ENCODE measurements at regions of chr19 and their contacts with region 1.

Region 1: DNA sequence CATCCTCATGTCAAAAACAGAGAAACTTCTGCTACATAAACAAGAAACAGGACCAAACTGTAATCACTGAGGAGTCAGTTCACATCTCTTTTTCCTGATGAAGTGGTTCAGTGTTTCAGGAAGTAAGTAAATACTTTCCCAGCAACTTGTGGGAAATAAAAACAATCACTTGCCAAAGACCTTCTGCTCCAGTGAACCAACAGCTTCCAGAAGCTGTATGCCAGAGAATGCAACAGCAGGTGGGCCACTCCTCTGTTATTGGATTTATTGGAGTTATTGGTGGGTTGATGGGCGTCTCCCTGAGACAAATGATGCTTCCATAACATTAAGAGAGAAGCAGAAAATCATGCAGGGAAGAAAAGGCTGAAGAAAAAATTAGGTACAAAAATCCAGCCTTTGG is 9.9 kb downstream of the SLC6A16 start:
- H3K4me3 ChIP-seq: no peak overlapping the region
- H3K27ac ChIP-seq: no peak overlapping the region
- H3K4me1 ChIP-seq: peaks cover 9% of the 10 kb centered on the region
- CTCF ChIP-seq: no peak

Region 2: DNA sequence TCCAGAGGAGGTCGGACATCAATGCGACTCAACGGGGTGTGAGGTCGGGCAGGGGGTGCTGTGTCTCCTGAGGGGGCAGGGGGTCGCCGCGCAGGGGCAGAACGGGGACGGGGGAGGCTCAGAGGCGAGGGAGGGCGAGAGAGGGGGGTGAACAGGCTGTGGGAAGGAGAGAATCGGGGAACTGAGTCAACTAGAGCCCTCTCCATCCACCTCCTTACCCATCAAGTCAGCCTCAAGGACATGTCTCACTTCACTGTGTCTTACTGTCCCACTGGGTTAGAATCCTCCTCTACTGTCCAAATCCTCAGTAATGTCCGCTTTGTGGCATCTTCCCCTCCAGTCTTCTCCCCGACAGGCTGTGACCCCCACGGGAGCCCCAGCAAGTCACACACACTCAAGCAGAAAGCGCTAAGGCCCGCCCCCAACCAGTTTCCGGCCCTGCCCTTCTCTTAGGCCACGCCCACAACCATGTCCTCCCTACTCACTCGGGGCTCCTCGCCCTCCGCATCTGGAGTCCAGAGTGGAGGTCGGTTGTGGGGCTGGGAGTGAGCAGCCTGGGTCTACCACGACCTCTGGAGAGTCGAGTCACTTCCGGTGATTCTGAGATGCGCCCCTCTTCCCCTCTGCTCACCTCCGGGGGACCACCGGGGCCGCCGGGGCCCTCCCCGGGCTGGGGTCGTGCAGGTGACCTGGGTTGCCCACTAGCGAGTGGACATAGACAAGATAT is 456.0 kb before region 1 on chr19:
- CTCF ChIA-PET with region 1: no interaction called
- POLR2A ChIA-PET with region 1: no interaction called
- H3K4me3 ChIP-seq: no peak overlapping the region
- H3K27ac ChIP-seq: no peak overlapping the region
- H3K4me1 ChIP-seq: no peaks in the 10 kb centered on the region
- CTCF ChIP-seq: no peak

Region 3: DNA sequence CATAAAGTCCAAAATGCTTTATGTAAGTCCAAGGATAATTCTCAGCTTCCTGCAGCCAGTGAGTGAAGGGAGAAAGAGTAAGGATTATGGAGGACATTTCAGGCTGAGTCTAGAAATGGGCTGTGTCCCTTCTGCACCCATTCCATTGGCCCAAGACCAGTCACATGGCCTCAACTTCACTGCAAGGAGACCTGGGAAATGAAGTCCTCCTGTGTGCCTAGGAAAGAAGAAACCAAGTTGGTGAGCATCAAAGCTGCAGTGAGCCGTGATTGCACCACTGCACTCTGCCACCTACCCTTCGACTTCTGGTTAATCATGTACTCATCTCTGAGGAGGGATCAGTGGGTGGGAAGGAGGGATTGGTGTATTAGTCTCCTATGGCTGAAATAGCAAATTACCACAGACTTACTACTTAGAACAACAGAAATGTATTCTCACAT is 16.5 kb after region 1 on chr19:
- CTCF ChIA-PET with region 1: interaction called, 17 read pairs
- POLR2A ChIA-PET with region 1: no interaction called
- H3K4me3 ChIP-seq: no peak overlapping the region
- H3K27ac ChIP-seq: no peak overlapping the region
- H3K4me1 ChIP-seq: no peaks in the 10 kb centered on the region
- CTCF ChIP-seq: no peak